ENCODE measurements at regions of chr7 and their contacts with region 1.

Region 1: GRCh38 chr7:128841921-128842651 is 11.9 kb downstream of the FLNC start:
- DNase-seq: peak; percentile 34 to 61 (median 45)
- H3K4me3 ChIP-seq: no peak overlapping the region
- H3K4me3 Mint-ChIP-seq: peak overlapping the region in 1 of 2 donors; percentile 30
- H3K27ac ChIP-seq: no peak overlapping the region
- H3K27ac Mint-ChIP-seq: no peak overlapping the region
- H3K4me1 ChIP-seq: no peaks in the 10 kb centered on the region
- H3K4me1 Mint-ChIP-seq: peaks cover 3% of the 10 kb centered on the region
- H3K27me3 ChIP-seq: no peaks in the 10 kb centered on the region
- H3K27me3 Mint-ChIP-seq: peaks cover 3 to 5% (median 5%) of the 10 kb centered on the region in 3 donors
- CTCF ChIP-seq: peak; percentile 97

Region 2: DNA sequence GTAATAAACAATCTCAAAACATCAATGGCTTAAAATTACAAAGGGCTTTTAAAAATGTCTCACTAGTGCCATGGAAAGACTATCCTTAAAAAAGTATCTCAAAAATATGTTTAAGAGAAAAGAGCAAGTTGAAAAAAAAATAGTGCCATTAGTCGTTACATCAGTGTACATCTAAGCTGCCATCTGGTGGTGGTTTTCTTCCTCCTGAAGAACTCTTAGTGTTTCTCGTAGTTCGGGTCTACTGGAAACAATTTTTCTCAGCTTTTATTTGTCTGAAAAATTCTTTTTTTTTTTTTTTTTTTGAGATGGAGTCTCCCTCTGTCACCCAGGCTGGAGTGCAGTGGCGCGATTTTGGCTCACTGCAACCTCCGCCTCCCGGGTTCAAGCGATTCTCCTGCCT is 175.9 kb before region 1 on chr7:
- intact Hi-C with region 1: no loop called
- DNase-seq: no peak
- H3K4me3 ChIP-seq: no peak overlapping the region
- H3K4me3 Mint-ChIP-seq: no peak overlapping the region
- H3K27ac ChIP-seq: no peak overlapping the region
- H3K27ac Mint-ChIP-seq: no peak overlapping the region
- H3K4me1 ChIP-seq: no peaks in the 10 kb centered on the region
- H3K4me1 Mint-ChIP-seq: no peaks in the 10 kb centered on the region
- H3K27me3 ChIP-seq: no peaks in the 10 kb centered on the region
- H3K27me3 Mint-ChIP-seq: no peaks in the 10 kb centered on the region
- CTCF ChIP-seq: no peak

Region 3: GRCh38 chr7:128770233-128770632 is 71.9 kb before region 1 on chr7:
- intact Hi-C with region 1: no loop called
- DNase-seq: no peak
- H3K4me3 ChIP-seq: no peak overlapping the region
- H3K4me3 Mint-ChIP-seq: no peak overlapping the region
- H3K27ac ChIP-seq: no peak overlapping the region
- H3K27ac Mint-ChIP-seq: no peak overlapping the region
- H3K4me1 ChIP-seq: no peaks in the 10 kb centered on the region
- H3K4me1 Mint-ChIP-seq: no peaks in the 10 kb centered on the region
- H3K27me3 ChIP-seq: no peaks in the 10 kb centered on the region
- H3K27me3 Mint-ChIP-seq: peaks cover 0 to 1% (median 0%) of the 10 kb centered on the region in 3 donors
- CTCF ChIP-seq: no peak

Region 4: DNA sequence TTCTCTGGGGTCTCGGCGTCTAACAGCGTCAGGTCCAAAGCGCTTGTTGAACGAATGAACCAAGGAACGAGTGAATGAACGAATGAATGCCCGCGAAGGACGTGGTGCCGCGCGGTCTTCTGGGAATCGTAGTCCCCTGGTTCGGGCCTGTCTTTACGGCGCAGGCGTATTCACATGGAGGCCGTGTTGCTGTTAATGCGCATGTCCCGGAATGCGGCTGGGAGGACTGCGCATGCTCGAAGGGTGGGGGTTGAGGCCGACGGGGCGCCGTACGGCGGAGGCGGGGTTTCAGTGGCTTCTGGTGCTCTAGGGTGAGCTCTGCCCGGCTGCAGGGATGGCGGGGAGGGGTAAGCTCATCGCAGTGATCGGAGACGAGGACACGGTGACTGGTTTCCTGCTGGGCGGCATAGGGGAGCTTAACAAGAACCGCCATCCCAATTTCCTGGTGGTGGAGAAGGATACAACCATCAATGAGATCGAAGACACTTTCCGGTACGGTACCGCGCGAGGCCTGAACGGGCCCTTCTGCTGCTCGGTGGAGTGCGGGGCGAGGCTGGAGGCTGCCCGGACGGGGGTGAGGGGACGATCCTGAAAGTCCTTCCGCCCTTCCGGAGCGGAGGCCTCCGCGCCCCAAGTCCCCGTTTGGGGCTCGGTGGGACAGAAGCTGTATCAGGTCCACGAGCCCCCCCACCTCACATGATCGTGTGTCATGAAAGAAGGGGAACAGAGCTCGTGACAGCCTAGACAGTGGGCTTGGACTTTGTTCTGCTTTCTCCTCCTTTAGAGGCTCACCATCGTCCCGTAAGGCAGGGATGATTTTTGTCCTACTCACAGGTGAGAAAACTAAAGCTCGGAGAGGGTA is 20.7 kb after region 1 on chr7 and contains the start of gene ATP6V1F:
- intact Hi-C with region 1: no loop called
- DNase-seq: peak; percentile 97 to 98 (median 98)
- H3K4me3 ChIP-seq: peak within 1 kb of the TSS; percentile 70 to 96 (median 87)
- H3K4me3 Mint-ChIP-seq: peak within 1 kb of the TSS; percentile 98 to 100
- H3K27ac ChIP-seq: peak within 1 kb of the TSS; percentile 99
- H3K27ac Mint-ChIP-seq: peak within 1 kb of the TSS; percentile 99 to 100 (median 99)
- H3K4me1 ChIP-seq: peaks cover 11 to 14% of the 10 kb centered on the region in 2 donors
- H3K4me1 Mint-ChIP-seq: peaks cover 19% of the 10 kb centered on the region
- H3K27me3 ChIP-seq: no peaks in the 10 kb centered on the region
- H3K27me3 Mint-ChIP-seq: peaks cover 2 to 8% (median 5%) of the 10 kb centered on the region in 3 donors
- CTCF ChIP-seq: no peak
- polyA plus RNA-seq, gene ATP6V1F: 327 to 593 (median 511) TPM

Region 5: DNA sequence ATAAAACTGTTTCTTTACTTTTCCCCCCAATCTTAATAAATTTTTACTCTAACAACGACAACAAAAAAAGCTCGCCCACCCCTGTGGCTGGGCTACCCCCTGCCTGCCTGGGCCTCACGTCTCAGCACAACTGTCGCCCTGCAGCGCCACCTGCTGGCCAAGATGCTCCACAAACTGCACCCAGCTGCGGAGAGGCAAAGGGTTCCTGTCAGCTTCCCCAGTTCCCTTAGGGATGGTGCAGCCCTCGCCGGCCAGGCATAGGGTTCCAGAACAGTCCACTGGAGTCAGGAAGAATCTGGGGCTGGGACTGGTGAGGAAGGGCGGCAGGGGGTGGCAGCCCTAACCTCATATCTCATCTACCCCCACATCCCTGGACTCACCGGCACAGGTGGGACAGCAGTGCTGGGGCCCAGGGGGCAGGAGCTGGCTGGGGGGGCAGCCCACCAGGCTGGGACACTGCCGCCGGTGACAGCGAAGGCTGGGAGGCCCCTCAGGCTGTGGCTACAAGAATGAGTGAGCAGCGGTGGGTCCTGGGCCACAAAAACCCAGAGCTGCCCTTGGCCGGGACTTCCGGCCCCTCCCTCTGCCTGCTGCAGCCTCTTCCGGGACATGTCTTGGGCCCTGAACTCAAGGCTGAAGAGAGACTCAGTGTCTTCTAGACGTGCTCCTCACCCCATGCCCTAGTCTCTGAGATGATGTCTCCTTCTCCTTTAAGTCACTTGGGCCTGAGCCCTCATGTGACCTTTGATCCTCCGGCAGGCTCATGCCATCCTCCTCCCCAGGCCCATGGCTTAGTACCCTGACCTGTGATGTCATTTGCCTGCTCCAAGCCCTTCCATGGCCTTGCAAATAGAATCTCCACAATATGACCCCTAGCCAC is 41.8 kb after region 1 on chr7:
- intact Hi-C with region 1: loop called (anchors 1 to 5 kb)
- DNase-seq: peak; percentile 62 to 74 (median 72)
- H3K4me3 ChIP-seq: no peak overlapping the region
- H3K4me3 Mint-ChIP-seq: peak overlapping the region in 1 of 2 donors; percentile 50
- H3K27ac ChIP-seq: no peak overlapping the region
- H3K27ac Mint-ChIP-seq: no peak overlapping the region
- H3K4me1 ChIP-seq: no peaks in the 10 kb centered on the region
- H3K4me1 Mint-ChIP-seq: peaks cover 3% of the 10 kb centered on the region
- H3K27me3 ChIP-seq: peaks cover 0 to 4% of the 10 kb centered on the region in 2 donors
- H3K27me3 Mint-ChIP-seq: peaks cover 1 to 12% (median 5%) of the 10 kb centered on the region in 3 donors
- CTCF ChIP-seq: peak; percentile 95

Measured in CD14-positive monocyte (primary cell).